Right cardiac atrium (tissue), 5 donors: ENCODE measurements at regions of chr1 and their contacts with region 1.

Region 1: GRCh38 chr1:231240883-231241735 is at the start of gene GNPAT:
- DNase-seq: peak; percentile 92 to 97 (median 96)
- ATAC-seq: peak; percentile 99
- H3K4me3 ChIP-seq: peak within 1 kb of the TSS; percentile 99
- H3K27ac ChIP-seq: peak within 1 kb of the TSS; percentile 91
- H3K4me1 ChIP-seq: no peaks in the 10 kb centered on the region
- H3K27me3 ChIP-seq: no peaks in the 10 kb centered on the region
- total RNA-seq, gene GNPAT: 48.6 to 55.6 (median 50.3) TPM

Region 2: DNA sequence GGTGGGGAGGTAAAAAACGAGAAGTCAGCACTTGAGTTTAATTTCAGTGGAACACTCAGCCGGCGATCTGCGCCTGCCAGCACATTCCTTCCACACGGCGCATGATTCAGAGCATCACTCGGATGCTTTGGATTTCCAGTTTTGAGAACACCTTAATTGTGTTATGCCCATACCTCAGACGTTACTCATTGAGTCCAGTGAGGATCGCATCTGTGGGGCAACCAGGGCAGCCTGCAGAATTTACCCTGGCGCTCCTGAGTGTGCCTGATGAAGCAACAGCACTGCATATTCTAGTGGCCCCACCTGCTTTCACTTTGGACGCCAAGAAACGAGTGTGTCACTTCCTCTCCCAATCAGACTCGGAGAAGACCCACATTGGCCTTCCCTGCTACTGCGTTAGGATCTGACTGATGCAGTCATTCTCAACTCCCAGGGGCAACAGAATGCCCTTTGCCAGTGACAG is 220.9 kb before region 1 on chr1:
- intact Hi-C with region 1: no loop called
- DNase-seq: no peak
- ATAC-seq: peak in 1 of 2 donors; percentile 51
- H3K4me3 ChIP-seq: no peak overlapping the region
- H3K27ac ChIP-seq: no peak overlapping the region
- H3K4me1 ChIP-seq: no peaks in the 10 kb centered on the region
- H3K27me3 ChIP-seq: no peaks in the 10 kb centered on the region

Region 3: DNA sequence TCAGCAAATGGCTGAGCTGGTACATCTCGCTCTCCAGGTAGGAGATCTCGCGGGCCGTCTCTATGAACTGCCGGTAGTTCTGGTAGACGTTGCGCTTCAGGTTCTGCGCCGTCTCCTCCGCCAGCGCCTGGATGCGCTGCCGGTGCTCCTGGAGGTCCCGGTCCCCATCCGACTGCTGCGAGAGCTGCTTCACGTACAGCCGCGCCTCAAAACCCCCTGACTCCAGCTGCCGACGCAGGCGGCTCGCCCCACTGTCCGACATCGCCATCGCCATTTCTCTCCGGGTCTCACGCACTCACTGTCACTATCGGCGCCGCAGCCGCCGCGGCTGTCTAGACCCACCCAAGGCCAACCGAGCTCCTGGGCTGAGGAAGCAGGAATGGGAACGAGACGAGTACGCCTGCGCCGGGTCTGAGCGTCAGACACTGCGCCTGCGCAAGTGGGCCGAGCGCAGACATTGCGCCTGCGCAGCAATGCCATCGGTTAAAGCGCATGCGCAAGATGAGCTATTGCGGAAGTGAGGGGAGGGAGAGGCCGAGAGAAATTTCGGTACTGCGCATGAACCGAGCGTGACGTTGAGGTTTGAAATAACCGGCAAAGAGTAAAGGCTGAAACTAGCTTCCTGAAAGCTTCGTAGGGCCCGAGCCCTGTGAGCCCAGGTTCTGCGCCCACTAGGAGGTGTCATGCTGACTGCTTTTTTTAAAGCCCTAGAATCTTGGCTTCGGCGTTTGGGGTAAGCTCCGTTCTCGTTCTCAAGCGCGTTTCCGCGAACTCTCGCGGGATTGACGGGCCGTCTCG is 96.6 kb after region 1 on chr1 and contains the start of gene EXOC8:
- intact Hi-C with region 1: loop called in 1 of 4 experiments (anchors 10 kb)
- DNase-seq: peak; percentile 94 to 98 (median 97)
- ATAC-seq: peak; percentile 97
- H3K4me3 ChIP-seq: peak within 1 kb of the TSS; percentile 78
- H3K27ac ChIP-seq: peak within 1 kb of the TSS; percentile 92
- H3K4me1 ChIP-seq: peaks cover 12% of the 10 kb centered on the region
- H3K27me3 ChIP-seq: no peaks in the 10 kb centered on the region
- total RNA-seq, gene EXOC8: 12.3 to 16.9 (median 14.0) TPM

Region 4: GRCh38 chr1:231478800-231479199 is 237.7 kb after region 1 on chr1:
- intact Hi-C with region 1: no loop called
- DNase-seq: no peak
- ATAC-seq: no peak
- H3K4me3 ChIP-seq: no peak overlapping the region
- H3K27ac ChIP-seq: no peak overlapping the region
- H3K4me1 ChIP-seq: no peaks in the 10 kb centered on the region
- H3K27me3 ChIP-seq: no peaks in the 10 kb centered on the region